ENCODE measurements at regions of chr1 and their contacts with region 1.

Region 1: DNA sequence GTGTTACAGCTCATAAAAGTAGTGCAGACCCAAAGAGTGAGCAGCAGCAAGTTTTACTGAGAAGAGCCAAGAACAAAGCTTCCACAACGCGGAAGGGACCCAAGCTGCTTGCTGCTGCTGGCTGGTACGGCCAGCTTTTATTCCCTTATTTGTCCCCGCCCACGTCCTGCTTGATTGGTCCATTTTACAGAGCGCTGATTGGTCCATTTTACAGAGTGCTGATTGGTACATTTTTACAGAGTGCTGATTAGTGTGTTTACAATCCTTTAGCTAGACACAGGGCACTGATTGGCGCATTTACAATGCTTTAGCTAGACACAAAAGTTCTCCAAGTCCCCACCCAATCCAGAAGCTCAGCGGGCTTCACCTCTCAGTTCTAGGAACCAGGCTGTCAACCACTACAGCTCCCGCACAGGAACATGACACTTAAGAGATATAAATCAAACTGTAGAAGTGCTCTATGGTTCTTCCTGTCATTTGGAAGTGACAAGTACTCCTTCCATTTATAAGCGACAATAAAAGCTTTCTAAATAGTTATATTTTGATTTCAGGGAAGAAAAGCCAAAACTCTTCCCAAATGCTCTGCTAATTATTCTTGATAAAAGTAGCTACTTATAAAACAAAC is 28.5 kb downstream of the RNF115 start:
- DNase-seq: no peak

Region 2: DNA sequence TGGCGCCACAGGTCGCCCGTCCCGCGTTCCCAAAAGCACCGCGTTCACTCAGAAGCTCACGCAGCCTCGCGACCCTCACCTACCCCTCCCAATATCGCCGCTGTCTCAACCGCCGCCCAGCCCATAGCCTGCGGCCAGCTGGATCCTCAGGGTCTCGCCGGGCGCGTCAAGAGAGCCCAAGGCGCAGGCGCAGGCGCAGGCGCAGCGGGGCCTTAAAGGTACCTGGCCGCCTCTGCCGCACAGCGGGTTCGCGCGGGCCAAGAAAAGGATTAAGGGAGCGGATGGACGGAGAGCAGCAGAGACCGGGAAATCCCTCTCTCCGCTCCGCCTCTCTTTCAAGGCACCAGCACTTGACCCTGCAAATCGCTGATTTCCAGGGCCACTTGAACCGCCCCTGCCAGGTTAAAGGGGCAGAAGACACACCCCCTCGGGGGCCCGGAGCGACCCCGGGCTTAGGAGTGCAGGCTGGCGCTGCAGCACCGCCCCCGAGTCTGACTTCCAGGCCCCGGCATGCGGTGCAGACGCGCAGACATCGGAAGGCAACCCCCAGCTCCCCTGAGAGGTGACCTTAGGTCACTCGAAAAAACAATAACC is 369.8 kb before region 1 on chr1 and contains the start of gene NBPF20:
- intact Hi-C with region 1: loop called in 1 of 2 experiments (anchors 5 kb)
- DNase-seq: peak; percentile 90
- total RNA-seq, gene NBPF20: 2.1 to 3.6 TPM

Region 3: GRCh38 chr1:145806408-145806807 is 11.0 kb after region 1 on chr1:
- intact Hi-C with region 1: no loop called
- DNase-seq: no peak